ENCODE measurements at regions of chr7 and their contacts with region 1.

Region 1: DNA sequence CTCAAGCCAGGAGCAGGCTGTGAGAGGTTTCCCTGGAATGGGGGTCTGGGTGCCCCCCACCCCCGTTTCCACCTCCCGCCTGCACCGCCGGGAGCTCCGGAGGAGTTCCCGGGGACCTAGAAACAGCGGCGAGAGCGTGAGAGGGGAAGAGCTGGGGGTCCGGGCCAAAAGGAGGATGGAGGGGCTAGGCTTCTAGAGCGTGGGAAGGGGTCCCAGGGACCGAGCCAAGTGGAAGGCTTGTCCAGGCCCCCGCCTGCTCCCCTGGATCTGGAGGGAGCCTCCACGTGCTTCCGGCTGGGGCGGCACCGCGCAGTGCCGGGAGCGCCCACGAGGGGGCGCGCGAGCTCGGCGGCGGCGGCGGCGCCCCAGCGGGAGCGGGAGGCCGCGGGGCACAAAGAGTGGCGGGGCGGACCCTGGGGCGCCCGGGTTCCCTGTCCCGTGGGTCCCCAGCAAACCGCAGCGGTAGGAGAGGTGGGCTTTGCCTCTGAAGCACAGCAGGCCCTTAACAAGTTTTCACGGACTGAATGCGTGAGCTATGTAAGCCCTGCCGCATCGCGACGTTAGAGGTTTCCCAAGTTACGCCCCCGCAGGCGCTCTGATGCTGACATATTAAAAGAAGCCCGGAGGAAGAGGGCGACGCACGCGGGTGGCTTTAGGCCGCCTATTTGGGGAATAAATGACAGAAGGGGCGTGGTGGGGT is 104.4 kb upstream of the LRRC4 start:
- DNase-seq: peak; percentile 98
- H3K4me3 ChIP-seq: peak overlapping the region; percentile 60 to 77
- H3K27ac ChIP-seq: no peak overlapping the region; a peak in 1 of 4 replicates
- H3K4me1 ChIP-seq: peaks cover 4 to 10% of the 10 kb centered on the region in 2 experiments; a peak in 2 of 4 replicates
- H3K27me3 ChIP-seq: 0 out of 2 replicates have a peak, but pooled peaks cover 9% of the 10 kb centered on the region
- CTCF ChIP-seq: peak; percentile 85
- EP300 ChIP-seq: peak in 1 of 2 experiments; percentile 74; a peak in 1 of 4 replicates
- RAD21 ChIP-seq: peak; percentile 60

Region 2: GRCh38 chr7:127699852-127700251 is 435.8 kb before region 1 on chr7:
- CTCF ChIA-PET with region 1: interaction called, 12 read pairs
- POLR2A ChIA-PET with region 1: no interaction called
- DNase-seq: no peak
- H3K4me3 ChIP-seq: no peak overlapping the region
- H3K27ac ChIP-seq: no peak overlapping the region
- H3K4me1 ChIP-seq: peaks cover 0 to 7% of the 10 kb centered on the region in 2 experiments; a peak in 1 of 4 replicates
- H3K27me3 ChIP-seq: no peaks in the 10 kb centered on the region
- CTCF ChIP-seq: no peak
- EP300 ChIP-seq: no peak
- RAD21 ChIP-seq: no peak

Region 3: DNA sequence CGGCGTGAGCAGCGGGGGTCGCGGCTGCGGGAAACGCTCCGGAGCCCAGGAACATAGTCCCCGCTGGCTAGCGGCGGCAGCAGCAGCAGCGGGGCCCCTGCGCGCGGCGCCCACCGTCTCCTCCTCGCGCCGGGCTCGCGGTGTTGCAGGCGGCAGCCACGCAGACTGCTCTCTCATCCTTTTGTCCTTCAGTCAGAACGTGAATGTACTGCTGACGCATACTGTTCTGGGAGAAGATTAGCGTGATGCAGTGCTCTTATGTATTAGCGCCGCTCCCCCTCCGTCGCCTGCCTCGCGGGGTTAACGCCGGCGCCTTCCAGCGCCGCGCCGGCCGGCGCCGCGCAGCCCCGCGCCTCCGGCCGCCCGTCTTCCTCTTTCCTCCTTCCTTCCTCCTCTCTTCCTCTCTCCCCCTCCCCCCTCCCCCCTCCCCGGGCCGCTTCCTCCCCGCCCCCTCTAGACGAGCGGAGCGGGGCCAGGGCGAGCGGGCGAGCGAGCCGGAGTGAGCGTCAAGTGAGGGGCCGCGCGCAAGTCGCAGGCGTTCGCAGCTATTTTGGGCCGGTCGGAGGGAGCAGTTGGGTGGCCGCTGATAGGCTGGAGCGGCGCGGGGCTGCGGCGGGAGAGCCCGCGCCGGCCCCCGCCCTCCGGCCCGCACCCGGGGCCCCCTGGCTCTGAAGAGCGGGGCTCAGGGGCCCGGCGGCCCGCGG is 103.6 kb before region 1 on chr7:
- CTCF ChIA-PET with region 1: interaction called, 59 read pairs
- POLR2A ChIA-PET with region 1: no interaction called
- DNase-seq: peak; percentile 92
- H3K4me3 ChIP-seq: peak overlapping the region; percentile 55 to 62
- H3K27ac ChIP-seq: peak overlapping the region in 1 of 2 experiments; percentile 51; a peak in 2 of 4 replicates
- H3K4me1 ChIP-seq: peaks cover 0 to 19% of the 10 kb centered on the region in 2 experiments; a peak in 2 of 4 replicates
- H3K27me3 ChIP-seq: no peaks in the 10 kb centered on the region
- CTCF ChIP-seq: peak; percentile 44
- EP300 ChIP-seq: peak in 1 of 2 experiments; percentile 11; a peak in 1 of 4 replicates
- RAD21 ChIP-seq: peak; percentile 43

Region 4: GRCh38 chr7:128091106-128091505 is 44.6 kb before region 1 on chr7:
- CTCF ChIA-PET with region 1: interaction called, 35 read pairs
- POLR2A ChIA-PET with region 1: no interaction called
- DNase-seq: no peak
- H3K4me3 ChIP-seq: no peak overlapping the region
- H3K27ac ChIP-seq: no peak overlapping the region
- H3K4me1 ChIP-seq: peaks cover 0 to 26% of the 10 kb centered on the region in 2 experiments; a peak in 2 of 4 replicates
- H3K27me3 ChIP-seq: no peaks in the 10 kb centered on the region
- CTCF ChIP-seq: no peak
- EP300 ChIP-seq: no peak
- RAD21 ChIP-seq: no peak

Region 5: GRCh38 chr7:128115391-128116332 is 20.0 kb before region 1 on chr7:
- CTCF ChIA-PET with region 1: interaction called, 22 read pairs
- POLR2A ChIA-PET with region 1: no interaction called
- DNase-seq: no peak
- H3K4me3 ChIP-seq: no peak overlapping the region
- H3K27ac ChIP-seq: no peak overlapping the region
- H3K4me1 ChIP-seq: peaks cover 7 to 32% of the 10 kb centered on the region in 2 experiments; a peak in 2 of 4 replicates
- H3K27me3 ChIP-seq: no peaks in the 10 kb centered on the region
- CTCF ChIP-seq: no peak
- EP300 ChIP-seq: no peak
- RAD21 ChIP-seq: no peak

Region 6: DNA sequence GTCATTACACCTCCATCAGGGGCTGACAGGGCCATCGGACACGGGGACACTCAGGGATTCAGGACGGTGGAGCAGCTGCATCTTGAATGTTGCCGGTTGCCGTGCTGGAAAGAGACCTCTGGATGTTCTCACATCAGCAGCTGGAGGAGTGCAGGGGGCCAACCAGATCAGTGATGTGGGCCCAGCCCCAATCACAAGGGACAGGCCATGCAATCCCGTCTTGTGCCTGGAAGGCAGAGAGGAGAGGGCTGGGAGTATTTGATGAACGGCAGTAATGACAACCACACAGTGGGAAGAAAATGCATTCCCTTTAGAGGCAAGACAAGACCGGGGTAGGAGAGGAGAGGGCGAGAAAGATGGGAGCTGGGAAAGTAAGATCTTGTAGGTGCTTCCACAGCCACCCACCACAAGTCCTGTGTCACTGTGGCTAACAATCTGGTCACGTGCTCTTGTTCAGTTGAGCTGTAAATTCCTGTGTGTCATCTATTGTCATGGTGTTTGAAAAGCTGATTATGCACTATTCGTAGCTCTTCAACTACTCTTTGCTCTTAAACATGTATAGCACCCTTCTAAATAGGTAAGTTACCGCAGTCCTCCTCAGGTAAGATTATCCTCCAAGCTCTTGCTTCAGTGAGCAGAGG is 19.6 kb after region 1 on chr7:
- CTCF ChIA-PET with region 1: interaction called, 24 read pairs
- POLR2A ChIA-PET with region 1: no interaction called
- DNase-seq: no peak
- H3K4me3 ChIP-seq: no peak overlapping the region
- H3K27ac ChIP-seq: no peak overlapping the region
- H3K4me1 ChIP-seq: peaks cover 0 to 2% of the 10 kb centered on the region in 2 experiments; a peak in 1 of 4 replicates
- H3K27me3 ChIP-seq: peaks cover 23% of the 10 kb centered on the region; the same call in 1 of the 2 replicates
- CTCF ChIP-seq: no peak
- EP300 ChIP-seq: no peak
- RAD21 ChIP-seq: no peak

Region 7: GRCh38 chr7:128176696-128177095 is 41.0 kb after region 1 on chr7:
- CTCF ChIA-PET with region 1: interaction called, 15 read pairs
- POLR2A ChIA-PET with region 1: interaction called, 3 read pairs
- DNase-seq: no peak
- H3K4me3 ChIP-seq: no peak overlapping the region
- H3K27ac ChIP-seq: no peak overlapping the region
- H3K4me1 ChIP-seq: no peaks in the 10 kb centered on the region; a peak in 1 of 4 replicates
- H3K27me3 ChIP-seq: peaks cover 8% of the 10 kb centered on the region; the same call in 1 of the 2 replicates
- CTCF ChIP-seq: no peak
- EP300 ChIP-seq: no peak
- RAD21 ChIP-seq: no peak

Region 8: DNA sequence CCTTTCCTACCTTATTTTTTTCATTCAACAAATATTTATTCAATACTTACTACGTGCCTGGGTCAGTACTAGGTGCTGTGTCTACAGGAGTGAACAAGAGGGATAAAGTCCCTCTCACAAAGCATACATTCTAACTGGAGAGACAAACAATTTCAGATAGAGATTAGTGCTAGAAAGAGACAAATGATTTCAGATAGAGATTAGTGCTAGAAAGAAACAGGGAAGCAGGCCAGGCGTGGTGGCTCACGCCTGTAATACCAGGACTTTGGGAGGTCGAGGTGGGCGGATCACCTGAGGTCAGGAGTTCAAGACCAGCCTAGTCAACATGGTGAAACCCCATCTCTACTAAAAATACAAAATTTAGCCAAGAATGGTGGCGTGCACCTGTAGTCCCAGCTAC is 173.5 kb after region 1 on chr7:
- CTCF ChIA-PET with region 1: no interaction called
- POLR2A ChIA-PET with region 1: no interaction called
- DNase-seq: no peak
- H3K4me3 ChIP-seq: no peak overlapping the region
- H3K27ac ChIP-seq: no peak overlapping the region
- H3K4me1 ChIP-seq: no peaks in the 10 kb centered on the region
- H3K27me3 ChIP-seq: no peaks in the 10 kb centered on the region
- CTCF ChIP-seq: no peak
- EP300 ChIP-seq: no peak
- RAD21 ChIP-seq: no peak

Region 9: GRCh38 chr7:128341733-128342132 is 206.1 kb after region 1 on chr7:
- CTCF ChIA-PET with region 1: no interaction called
- POLR2A ChIA-PET with region 1: no interaction called
- DNase-seq: no peak
- H3K4me3 ChIP-seq: peak overlapping the region in 1 of 2 experiments; percentile 80; a peak in 1 of 4 replicates
- H3K27ac ChIP-seq: no peak overlapping the region
- H3K4me1 ChIP-seq: peaks cover 0 to 15% of the 10 kb centered on the region in 2 experiments; a peak in 2 of 4 replicates
- H3K27me3 ChIP-seq: no peaks in the 10 kb centered on the region
- CTCF ChIP-seq: no peak
- EP300 ChIP-seq: no peak
- RAD21 ChIP-seq: no peak

Region 10: DNA sequence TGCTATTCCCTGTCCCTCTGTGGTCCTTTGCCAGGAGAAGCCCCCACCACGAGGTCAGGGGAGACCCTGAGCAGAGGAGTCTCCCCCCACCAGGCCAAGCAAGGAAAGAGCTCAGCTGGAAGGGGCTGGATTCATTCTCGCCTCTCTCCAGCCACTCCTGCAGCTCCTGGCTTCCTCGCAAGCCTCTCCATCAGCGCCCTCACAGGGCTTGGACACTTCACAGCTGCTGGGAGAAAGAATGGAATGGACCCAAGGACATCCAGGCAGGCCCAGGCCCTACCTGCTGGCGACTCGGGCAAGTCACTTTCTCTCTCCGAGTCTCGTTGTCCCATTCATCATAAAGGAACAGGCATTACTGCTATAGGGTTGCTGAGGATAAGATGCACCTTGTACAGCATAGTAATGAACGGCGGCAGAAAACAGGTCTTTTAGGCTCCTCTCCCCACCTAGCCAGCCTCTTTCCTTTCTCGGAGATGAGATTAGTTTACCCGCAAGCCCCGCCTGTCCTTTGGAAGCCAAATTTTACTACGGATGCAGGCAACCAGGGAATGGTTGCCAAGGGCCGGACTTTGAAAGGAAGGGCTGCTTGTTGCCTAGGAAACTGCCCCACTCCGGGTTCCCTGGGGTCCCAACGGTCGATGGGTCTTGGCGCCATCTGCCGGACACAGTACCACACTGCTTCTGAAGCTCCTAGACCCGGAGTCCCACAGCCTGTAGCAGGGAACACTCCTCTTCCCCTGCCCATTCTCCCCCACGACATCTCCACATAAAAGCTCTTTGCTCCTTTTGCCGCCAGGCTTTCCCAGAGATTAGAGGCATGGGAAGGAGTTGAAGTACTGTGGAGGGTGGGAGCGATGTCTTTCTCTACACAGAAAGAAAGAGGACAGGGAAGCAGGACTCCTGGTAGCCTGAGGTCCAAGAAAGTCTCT is 251.8 kb after region 1 on chr7:
- CTCF ChIA-PET with region 1: no interaction called
- POLR2A ChIA-PET with region 1: no interaction called
- DNase-seq: peak; percentile 99
- H3K4me3 ChIP-seq: peak overlapping the region in 1 of 2 experiments; percentile 16; a peak in 2 of 4 replicates
- H3K27ac ChIP-seq: peak overlapping the region in 1 of 2 experiments; percentile 94; a peak in 2 of 4 replicates
- H3K4me1 ChIP-seq: peaks cover 0 to 41% of the 10 kb centered on the region in 2 experiments; a peak in 1 of 4 replicates
- H3K27me3 ChIP-seq: no peaks in the 10 kb centered on the region
- CTCF ChIP-seq: peak; percentile 98
- EP300 ChIP-seq: peak in 1 of 2 experiments; percentile 57; a peak in 2 of 4 replicates
- RAD21 ChIP-seq: peak; percentile 99